ENCODE measurements at regions of chr3 and their contacts with region 1.

Region 1: GRCh38 chr3:132726341-132726823 is 4.2 kb upstream of the NPHP3 start:
- DNase-seq: peak; percentile 24
- CTCF ChIP-seq: peak; percentile 64

Region 2: GRCh38 chr3:132713977-132714727 is 12.2 kb before region 1 on chr3:
- CTCF ChIA-PET with region 1: interaction called, 12 read pairs
- POLR2A ChIA-PET with region 1: no interaction called
- DNase-seq: no peak
- CTCF ChIP-seq: no peak

Region 3: GRCh38 chr3:132738314-132738713 is 11.9 kb after region 1 on chr3:
- CTCF ChIA-PET with region 1: interaction called, 14 read pairs
- POLR2A ChIA-PET with region 1: no interaction called
- DNase-seq: no peak
- CTCF ChIP-seq: no peak

Region 4: DNA sequence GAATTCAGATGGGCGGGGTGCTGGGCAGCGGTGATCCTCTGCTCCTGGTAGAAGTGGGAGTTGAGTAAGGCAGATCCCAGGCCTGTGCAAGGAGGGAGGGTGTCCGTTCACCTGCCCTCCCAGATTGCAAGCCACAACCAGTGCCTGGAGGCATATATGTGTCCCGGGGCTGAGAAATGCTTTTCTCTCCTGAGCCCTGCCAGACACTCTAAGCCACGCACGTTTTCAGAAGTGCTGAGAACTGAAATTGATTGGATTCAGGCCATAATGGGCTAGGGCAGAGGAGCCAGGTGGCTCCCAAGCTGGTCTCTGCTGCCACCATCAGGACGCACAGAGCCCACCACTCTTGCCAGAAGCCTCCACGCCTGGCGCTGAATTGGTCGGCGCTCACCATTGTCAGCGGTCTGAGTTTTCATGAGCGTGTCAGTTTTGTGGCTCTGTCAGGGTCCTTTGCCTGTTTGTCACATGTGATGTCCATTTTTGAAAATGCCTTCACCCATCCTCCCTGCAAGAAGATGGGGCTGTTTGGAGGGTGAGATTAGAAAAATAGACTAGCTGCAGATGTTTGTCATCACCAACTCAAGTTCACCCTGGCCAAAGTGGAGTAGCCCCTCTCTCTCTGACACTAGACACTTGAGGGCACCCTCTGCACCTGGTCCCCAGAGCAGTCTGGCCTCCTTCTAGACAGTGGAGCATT is 658.1 kb after region 1 on chr3:
- CTCF ChIA-PET with region 1: interaction called, 17 read pairs
- POLR2A ChIA-PET with region 1: no interaction called
- DNase-seq: peak; percentile 61
- CTCF ChIP-seq: peak; percentile 64

Region 5: GRCh38 chr3:133424937-133425869 is 698.8 kb after region 1 on chr3:
- CTCF ChIA-PET with region 1: interaction called, 21 read pairs
- POLR2A ChIA-PET with region 1: no interaction called
- DNase-seq: no peak
- CTCF ChIP-seq: no peak

Measured in GM10248 (cell line).